Activated CD4-positive, alpha-beta memory T cell treated with anti-CD3 and anti-CD28 coated beads for 36 hours (primary cell): ENCODE measurements at regions of chr3 and their contacts with region 1.

Region 1: DNA sequence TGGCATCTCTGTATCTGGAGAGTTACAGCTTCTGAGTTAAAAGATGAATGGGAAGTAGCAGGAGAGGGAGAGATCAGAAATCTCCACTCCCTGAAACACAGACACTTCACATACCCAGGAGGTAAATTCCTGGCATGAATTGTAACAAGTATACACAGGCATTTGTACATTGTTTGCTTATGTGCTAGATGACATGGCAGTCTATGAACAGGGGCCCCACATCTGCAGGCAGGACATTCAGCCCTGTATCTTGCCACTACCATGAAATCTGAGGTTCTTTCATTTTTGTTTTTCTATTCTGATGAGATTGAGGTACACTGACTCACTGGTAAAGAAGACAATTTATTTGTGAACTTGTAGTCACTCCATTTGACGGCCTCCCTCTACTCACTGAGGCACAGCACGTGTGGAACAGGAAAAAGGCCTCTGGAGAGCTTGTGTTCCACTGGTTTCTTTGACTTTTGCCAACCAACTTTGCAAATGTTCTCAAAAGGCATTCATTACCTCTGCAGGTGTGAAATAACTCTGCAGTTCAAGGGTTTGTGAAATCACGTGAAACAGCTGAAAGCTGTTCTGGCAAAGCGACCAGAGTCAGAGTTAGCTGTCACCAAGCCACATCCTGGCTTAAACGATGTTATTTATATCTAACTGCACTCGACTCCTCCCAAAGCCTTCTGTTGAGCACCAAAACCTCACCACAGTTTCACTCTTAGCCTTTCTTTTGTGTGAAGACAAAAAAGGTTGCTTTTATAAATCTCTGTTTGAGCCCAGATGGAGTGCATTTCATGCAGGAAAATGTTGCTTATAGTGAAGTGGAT is 401.3 kb upstream of the CFAP20DC start:
- DNase-seq: peak; percentile 73
- H3K4me3 Mint-ChIP-seq: peak overlapping the region; percentile 53
- H3K27ac Mint-ChIP-seq: peak overlapping the region; percentile 94
- H3K4me1 Mint-ChIP-seq: peaks cover 64% of the 10 kb centered on the region
- H3K27me3 Mint-ChIP-seq: no peaks in the 10 kb centered on the region

Region 2: DNA sequence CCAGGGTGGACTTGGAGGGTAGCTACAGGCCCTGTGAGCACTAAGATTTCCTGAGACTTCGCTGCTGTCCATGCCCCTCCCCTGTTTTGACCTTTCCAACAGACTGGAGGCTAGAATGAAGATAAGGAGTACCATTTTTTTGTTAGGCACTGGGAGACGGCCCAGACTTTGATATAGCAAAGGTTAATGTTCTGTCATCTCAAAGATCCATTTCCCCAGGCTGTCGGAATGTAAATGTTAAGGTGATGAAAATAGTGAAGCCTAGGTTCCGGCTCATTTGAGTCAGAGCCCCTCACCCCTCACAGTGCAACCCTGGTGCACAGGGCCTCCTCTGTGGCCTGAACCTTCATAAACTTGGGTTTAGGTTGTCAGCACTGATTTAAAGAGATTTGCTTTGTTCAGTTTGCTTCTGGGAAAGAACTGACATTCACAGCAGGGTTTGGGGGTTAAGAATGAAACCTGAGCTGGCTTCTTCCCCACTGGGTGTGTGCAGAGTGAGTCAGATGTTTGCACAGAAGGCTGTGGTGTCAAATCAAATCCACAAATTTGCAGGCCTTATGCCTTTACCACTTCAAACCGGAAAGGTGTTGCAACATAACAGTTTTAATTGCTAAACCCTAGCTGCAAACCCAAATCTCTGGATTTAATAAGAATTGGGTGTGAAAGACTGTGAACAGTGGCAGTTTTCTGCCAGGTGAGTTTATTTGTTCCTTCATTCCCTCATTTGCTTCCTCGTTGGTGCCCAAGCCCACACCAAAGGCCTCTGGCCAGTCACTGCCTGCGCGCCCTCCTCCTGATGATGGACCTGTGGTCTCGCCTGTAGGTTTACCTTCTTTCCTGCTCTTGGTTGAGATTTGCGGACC is 979.9 kb before region 1 on chr3:
- CTCF ChIA-PET with region 1: no interaction called
- POLR2A ChIA-PET with region 1: no interaction called
- intact Hi-C with region 1: loop called (anchors 10 kb)
- DNase-seq: peak; percentile 80
- H3K4me3 Mint-ChIP-seq: no peak overlapping the region
- H3K27ac Mint-ChIP-seq: peak overlapping the region; percentile 86
- H3K4me1 Mint-ChIP-seq: peaks cover 34% of the 10 kb centered on the region
- H3K27me3 Mint-ChIP-seq: no peaks in the 10 kb centered on the region

Region 3: GRCh38 chr3:59469948-59470723 is 19.0 kb after region 1 on chr3:
- CTCF ChIA-PET with region 1: no interaction called
- POLR2A ChIA-PET with region 1: interaction called, 3 read pairs
- intact Hi-C with region 1: loop called (anchors 1 kb)
- DNase-seq: peak; percentile 70
- H3K4me3 Mint-ChIP-seq: no peak overlapping the region
- H3K27ac Mint-ChIP-seq: peak overlapping the region; percentile 71
- H3K4me1 Mint-ChIP-seq: peaks cover 22% of the 10 kb centered on the region
- H3K27me3 Mint-ChIP-seq: no peaks in the 10 kb centered on the region

Region 4: GRCh38 chr3:59486520-59486919 is 35.4 kb after region 1 on chr3:
- CTCF ChIA-PET with region 1: no interaction called
- POLR2A ChIA-PET with region 1: no interaction called
- intact Hi-C with region 1: no loop called
- DNase-seq: no peak
- H3K4me3 Mint-ChIP-seq: no peak overlapping the region
- H3K27ac Mint-ChIP-seq: no peak overlapping the region
- H3K4me1 Mint-ChIP-seq: peaks cover 5% of the 10 kb centered on the region
- H3K27me3 Mint-ChIP-seq: no peaks in the 10 kb centered on the region

Region 5: DNA sequence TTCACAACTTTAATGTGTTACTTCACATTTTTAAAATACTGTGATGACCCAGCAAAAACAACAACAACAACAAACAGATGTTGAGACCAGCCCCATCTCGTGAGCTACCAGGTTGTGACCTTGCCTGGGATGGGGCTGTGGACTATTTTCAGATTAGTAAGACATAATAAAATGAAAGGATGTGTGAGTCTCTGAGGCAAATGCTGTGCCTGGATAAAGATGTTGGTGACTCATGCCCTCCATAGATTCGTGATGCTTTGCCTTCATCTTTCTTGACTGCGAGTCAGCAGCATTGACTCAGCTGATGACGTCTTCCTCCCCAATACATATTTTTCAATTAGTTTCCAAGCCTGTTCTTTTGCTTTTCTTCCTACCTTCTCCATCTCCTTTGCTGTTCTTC is 51.7 kb after region 1 on chr3:
- CTCF ChIA-PET with region 1: no interaction called
- POLR2A ChIA-PET with region 1: interaction called, 5 read pairs
- intact Hi-C with region 1: loop called (anchors 5 kb)
- DNase-seq: peak; percentile 58
- H3K4me3 Mint-ChIP-seq: no peak overlapping the region
- H3K27ac Mint-ChIP-seq: no peak overlapping the region
- H3K4me1 Mint-ChIP-seq: peaks cover 8% of the 10 kb centered on the region
- H3K27me3 Mint-ChIP-seq: no peaks in the 10 kb centered on the region

Region 6: GRCh38 chr3:59559721-59560435 is 108.7 kb after region 1 on chr3:
- CTCF ChIA-PET with region 1: interaction called, 3 read pairs
- POLR2A ChIA-PET with region 1: interaction called, 6 read pairs
- intact Hi-C with region 1: loop called (anchors 1 kb)
- DNase-seq: peak; percentile 50
- H3K4me3 Mint-ChIP-seq: no peak overlapping the region
- H3K27ac Mint-ChIP-seq: peak overlapping the region; percentile 80
- H3K4me1 Mint-ChIP-seq: peaks cover 31% of the 10 kb centered on the region
- H3K27me3 Mint-ChIP-seq: peaks cover 5% of the 10 kb centered on the region